ENCODE measurements at regions of chr11 and their contacts with region 1.

Region 1: GRCh38 chr11:134068829-134069425 is at the start of gene JAM3:
- DNase-seq: peak; percentile 76
- H3K4me3 ChIP-seq: peak within 1 kb of the TSS; percentile 86
- H3K27ac ChIP-seq: peak within 1 kb of the TSS; percentile 31
- H3K27me3 ChIP-seq: peaks cover 14% of the 10 kb centered on the region
- CTCF ChIP-seq: no peak
- polyA plus RNA-seq, gene JAM3: 66.2 and 79.6 TPM in 2 replicates

Region 2: GRCh38 chr11:134082990-134083389 is 14.1 kb after region 1 on chr11:
- CTCF ChIA-PET with region 1: interaction called, 10 read pairs
- POLR2A ChIA-PET with region 1: interaction called, 3 read pairs
- DNase-seq: no peak
- H3K4me3 ChIP-seq: no peak overlapping the region
- H3K27ac ChIP-seq: no peak overlapping the region
- H3K27me3 ChIP-seq: no peaks in the 10 kb centered on the region
- CTCF ChIP-seq: no peak

Region 3: GRCh38 chr11:134124660-134125451 is 55.9 kb after region 1 on chr11:
- CTCF ChIA-PET with region 1: interaction called, 6 read pairs
- POLR2A ChIA-PET with region 1: interaction called, 26 read pairs
- DNase-seq: no peak
- H3K4me3 ChIP-seq: peak overlapping the region; percentile 58
- H3K27ac ChIP-seq: peak overlapping the region; percentile 74
- H3K27me3 ChIP-seq: no peaks in the 10 kb centered on the region
- CTCF ChIP-seq: no peak

Region 4: DNA sequence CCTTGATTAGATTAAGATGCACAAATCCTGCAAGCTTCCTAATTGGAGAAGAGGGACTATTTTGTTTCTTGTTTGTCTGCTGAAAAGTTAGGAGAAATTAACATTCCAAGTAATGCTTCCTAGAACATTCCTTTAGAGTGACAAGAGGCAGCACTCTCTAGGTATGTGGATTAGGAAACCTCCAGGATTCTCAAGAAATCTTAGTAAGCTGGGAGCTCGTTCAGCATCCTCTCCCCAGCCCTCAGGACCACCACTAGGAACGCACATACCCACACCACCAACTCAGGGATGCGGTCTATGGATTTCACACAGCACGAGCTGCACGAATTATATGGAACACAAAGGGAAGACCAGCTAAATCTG is 102.0 kb after region 1 on chr11:
- CTCF ChIA-PET with region 1: no interaction called
- POLR2A ChIA-PET with region 1: no interaction called
- DNase-seq: peak; percentile 2
- H3K4me3 ChIP-seq: no peak overlapping the region
- H3K27ac ChIP-seq: no peak overlapping the region
- H3K27me3 ChIP-seq: no peaks in the 10 kb centered on the region
- CTCF ChIP-seq: no peak